IMR-90 (cell line): ENCODE measurements at regions of chr10 and their contacts with region 1.

Region 1: GRCh38 chr10:6108603-6109443 is 20.0 kb downstream of the RBM17 start:
- DNase-seq: peak; percentile 61
- ATAC-seq: peak; percentile 53
- H3K4me3 ChIP-seq: no peak overlapping the region
- H3K27ac ChIP-seq: no peak overlapping the region
- H3K4me1 ChIP-seq: peaks cover 4% of the 10 kb centered on the region
- H3K27me3 ChIP-seq: no peaks in the 10 kb centered on the region
- CTCF ChIP-seq: peak; percentile 79
- POLR2A ChIP-seq: no peak
- RAD21 ChIP-seq: peak; percentile 86

Region 2: GRCh38 chr10:6151087-6151977 is 42.5 kb after region 1 on chr10:
- CTCF ChIA-PET with region 1: interaction called, 3 read pairs
- POLR2A ChIA-PET with region 1: no interaction called
- dilution Hi-C with region 1: no loop called
- in situ Hi-C with region 1: no loop called
- intact Hi-C with region 1: loop called (anchors 1 kb)
- DNase-seq: peak; percentile 69
- ATAC-seq: peak; percentile 96
- H3K4me3 ChIP-seq: no peak overlapping the region
- H3K27ac ChIP-seq: no peak overlapping the region
- H3K4me1 ChIP-seq: peaks cover 8% of the 10 kb centered on the region
- H3K27me3 ChIP-seq: no peaks in the 10 kb centered on the region
- CTCF ChIP-seq: peak; percentile 65
- POLR2A ChIP-seq: no peak
- RAD21 ChIP-seq: peak; percentile 58